Activated B cell treated with CpG ODN at 0.5 μM for 24 hours (primary cell): ENCODE measurements at regions of chr1 and their contacts with region 1.

Region 1: DNA sequence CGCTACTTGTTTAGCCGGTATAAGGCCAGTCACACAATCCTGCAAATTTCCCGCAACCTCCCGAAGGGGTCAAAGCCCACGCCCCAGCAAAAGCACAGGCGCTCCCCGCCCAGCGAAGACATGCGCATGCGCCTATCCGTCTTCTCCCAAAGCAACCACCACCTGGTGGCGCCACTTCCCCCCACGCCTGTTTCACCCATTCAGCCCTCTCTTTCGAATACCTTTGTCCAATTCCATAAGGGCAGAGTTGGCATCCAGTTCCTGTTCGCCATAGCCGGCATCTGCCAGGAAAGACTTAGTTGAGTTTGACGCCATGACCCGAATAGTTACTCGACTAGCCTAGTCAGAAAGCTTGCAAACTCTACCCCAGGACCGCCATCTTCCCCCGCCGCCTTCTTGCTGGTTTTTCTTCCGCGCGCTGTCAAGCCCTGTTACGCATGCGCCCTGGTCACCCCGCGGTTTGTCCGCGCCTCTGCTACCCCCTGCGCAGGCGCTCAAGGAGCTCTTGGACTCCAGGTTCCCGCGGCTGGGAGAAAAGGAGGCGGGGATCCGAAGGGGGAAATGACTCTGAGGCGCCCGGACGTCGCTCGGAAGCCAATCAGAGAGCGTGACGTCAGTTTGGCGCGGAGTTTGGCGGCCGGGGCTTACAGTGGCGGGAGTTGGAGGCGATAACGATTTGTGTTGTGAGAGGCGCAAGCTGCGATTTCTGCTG is at the starts of genes DTL and INTS7:
- DNase-seq: peak; percentile 93
- ATAC-seq: peak; percentile 86
- H3K4me3 Mint-ChIP-seq: peak within 1 kb of the TSS; percentile 99
- H3K27ac Mint-ChIP-seq: peak within 1 kb of the TSS; percentile 99
- H3K4me1 Mint-ChIP-seq: peaks cover 58% of the 10 kb centered on the region
- H3K27me3 Mint-ChIP-seq: no peaks in the 10 kb centered on the region
- CTCF ChIP-seq: peak; percentile 38
- total RNA-seq, gene DTL: 4.2 and 5.0 TPM in 2 replicates
- total RNA-seq, gene INTS7: 19.1 and 19.9 TPM in 2 replicates

Region 2: DNA sequence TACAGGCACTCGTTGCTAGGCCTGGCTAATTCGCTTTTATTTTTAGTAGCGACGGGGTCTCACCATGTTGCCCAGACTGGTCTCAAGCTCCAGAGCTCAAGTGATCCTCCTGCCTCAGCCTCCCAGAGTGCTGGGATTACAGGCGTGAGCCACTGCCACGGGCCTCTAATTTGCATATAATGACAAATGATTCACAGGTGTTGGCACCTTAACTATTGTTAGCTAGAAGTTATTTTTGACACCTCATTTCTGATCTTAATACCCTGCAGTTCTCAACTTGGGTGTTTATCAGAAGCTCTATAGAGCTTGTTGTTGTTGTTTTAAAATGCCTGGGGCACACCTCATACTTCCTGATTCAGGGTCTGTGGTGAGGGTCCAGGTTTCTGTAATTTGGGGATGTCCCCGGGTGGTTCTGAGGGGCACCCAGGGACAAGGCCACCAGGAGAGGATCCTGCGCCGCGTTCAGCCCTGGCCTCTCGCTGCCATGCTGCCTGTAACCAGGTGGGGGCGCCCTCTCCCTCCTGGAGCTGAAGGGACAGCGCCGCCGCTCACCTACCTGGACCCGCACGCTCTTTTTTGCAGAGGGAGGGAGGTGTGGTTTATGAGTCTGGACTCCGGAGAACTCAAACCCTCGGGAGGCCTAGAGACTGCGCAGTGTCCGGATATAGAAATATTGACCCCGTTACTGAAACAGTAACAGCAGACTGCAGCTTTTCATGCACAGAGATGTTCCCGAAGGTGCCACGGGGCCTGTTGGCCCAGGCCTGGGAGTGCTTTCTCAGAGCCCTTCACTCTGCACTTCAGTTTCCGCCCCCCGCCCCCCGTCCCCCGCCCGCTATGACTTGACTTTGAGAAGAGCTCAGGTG is 336.9 kb before region 1 on chr1:
- CTCF ChIA-PET with region 1: interaction called, 3 read pairs
- POLR2A ChIA-PET with region 1: interaction called, 7 read pairs
- intact Hi-C with region 1: loop called (anchors 1 kb)
- DNase-seq: peak; percentile 59
- ATAC-seq: peak; percentile 40
- H3K4me3 Mint-ChIP-seq: peak overlapping the region; percentile 68
- H3K27ac Mint-ChIP-seq: no peak overlapping the region
- H3K4me1 Mint-ChIP-seq: peaks cover 57% of the 10 kb centered on the region
- H3K27me3 Mint-ChIP-seq: peaks cover 3% of the 10 kb centered on the region
- CTCF ChIP-seq: peak; percentile 22

Region 3: GRCh38 chr1:211781260-211781659 is 254.0 kb before region 1 on chr1:
- CTCF ChIA-PET with region 1: no interaction called
- POLR2A ChIA-PET with region 1: no interaction called
- intact Hi-C with region 1: no loop called
- DNase-seq: no peak
- ATAC-seq: no peak
- H3K4me3 Mint-ChIP-seq: no peak overlapping the region
- H3K27ac Mint-ChIP-seq: no peak overlapping the region
- H3K4me1 Mint-ChIP-seq: peaks cover 2% of the 10 kb centered on the region
- H3K27me3 Mint-ChIP-seq: no peaks in the 10 kb centered on the region
- CTCF ChIP-seq: no peak

Region 4: GRCh38 chr1:212070720-212071302 is 35.5 kb after region 1 on chr1:
- CTCF ChIA-PET with region 1: interaction called, 12 read pairs
- POLR2A ChIA-PET with region 1: no interaction called
- intact Hi-C with region 1: no loop called
- DNase-seq: no peak
- ATAC-seq: peak; percentile 47
- H3K4me3 Mint-ChIP-seq: no peak overlapping the region
- H3K27ac Mint-ChIP-seq: no peak overlapping the region
- H3K4me1 Mint-ChIP-seq: no peaks in the 10 kb centered on the region
- H3K27me3 Mint-ChIP-seq: no peaks in the 10 kb centered on the region
- CTCF ChIP-seq: no peak

Region 5: DNA sequence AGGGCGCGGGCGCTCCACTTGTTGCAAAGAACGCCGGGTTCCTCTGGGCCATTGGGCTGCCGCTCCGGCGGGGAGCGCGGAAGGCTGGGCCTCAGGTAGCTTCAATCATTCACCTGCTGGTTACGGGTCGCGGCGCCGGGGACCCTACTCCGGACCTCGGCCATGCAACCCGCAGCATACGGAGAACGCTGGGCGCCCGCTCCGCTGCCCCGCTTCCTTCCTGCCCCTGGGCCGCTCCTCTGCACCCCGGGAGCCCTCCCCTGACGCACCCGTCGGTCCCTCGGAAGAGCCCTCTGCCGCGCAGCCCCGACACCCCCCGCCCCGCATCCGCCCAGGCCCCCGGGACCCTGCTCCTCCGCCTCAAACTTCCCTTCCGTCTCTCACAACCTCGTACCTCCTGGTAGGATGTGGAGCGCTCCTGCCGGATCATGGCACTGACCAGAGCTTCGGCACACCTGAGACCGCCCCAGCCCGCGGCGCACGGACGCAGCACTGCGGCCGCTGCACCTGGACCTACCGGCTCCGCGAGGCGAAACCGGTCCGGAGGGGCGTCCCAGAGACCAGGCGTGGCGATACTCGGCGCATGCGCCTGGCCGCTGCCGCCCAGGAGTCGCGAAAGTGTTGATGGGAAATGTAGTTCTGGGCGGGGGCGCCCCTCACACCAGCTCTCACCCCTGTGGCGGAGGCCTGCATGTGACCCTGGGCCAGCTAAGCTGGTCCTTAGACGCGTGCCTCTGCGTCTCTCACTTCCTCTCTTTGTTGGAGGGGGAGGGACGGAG is 379.2 kb after region 1 on chr1 and contains the start of gene PACC1:
- CTCF ChIA-PET with region 1: interaction called, 3 read pairs
- POLR2A ChIA-PET with region 1: no interaction called
- intact Hi-C with region 1: loop called (anchors 1 kb)
- DNase-seq: peak; percentile 93
- ATAC-seq: peak; percentile 98
- H3K4me3 Mint-ChIP-seq: peak within 1 kb of the TSS; percentile 100
- H3K27ac Mint-ChIP-seq: peak within 1 kb of the TSS; percentile 96
- H3K4me1 Mint-ChIP-seq: peaks cover 43% of the 10 kb centered on the region
- H3K27me3 Mint-ChIP-seq: no peaks in the 10 kb centered on the region
- CTCF ChIP-seq: no peak
- total RNA-seq, gene PACC1: 15.2 and 20.0 TPM in 2 replicates

Region 6: DNA sequence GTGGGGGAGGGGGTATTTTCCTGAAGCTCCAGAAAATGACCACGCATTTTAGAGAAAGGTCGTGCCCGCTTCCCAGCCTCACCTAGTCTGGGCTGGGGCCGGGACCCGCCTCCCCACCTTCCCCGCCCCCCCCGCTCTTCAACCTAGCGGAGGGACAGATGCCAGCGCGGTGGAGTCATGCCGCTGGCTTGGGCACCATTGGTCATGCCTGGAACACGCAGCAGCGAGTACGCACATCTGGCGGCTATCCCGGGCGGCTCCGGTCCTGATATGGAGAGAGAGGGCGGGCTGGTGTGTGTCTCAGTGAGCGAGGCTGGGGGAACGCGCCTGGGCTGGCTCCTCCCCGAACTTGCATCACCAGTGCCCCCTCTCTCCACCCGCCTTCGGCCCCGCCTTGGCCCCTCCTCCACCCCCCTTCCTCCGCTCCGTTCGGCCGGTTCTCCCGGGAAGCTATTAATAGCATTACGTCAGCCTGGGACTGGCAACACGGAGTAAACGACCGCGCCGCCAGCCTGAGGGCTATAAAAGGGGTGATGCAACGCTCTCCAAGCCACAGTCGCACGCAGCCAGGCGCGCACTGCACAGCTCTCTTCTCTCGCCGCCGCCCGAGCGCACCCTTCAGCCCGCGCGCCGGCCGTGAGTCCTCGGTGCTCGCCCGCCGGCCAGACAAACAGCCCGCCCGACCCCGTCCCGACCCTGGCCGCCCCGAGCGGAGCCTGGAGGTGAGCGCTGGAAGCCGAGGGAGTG is 573.1 kb after region 1 on chr1 and contains the start of gene ATF3:
- CTCF ChIA-PET with region 1: no interaction called
- POLR2A ChIA-PET with region 1: interaction called, 3 read pairs
- intact Hi-C with region 1: loop called (anchors 1 kb)
- DNase-seq: peak; percentile 76
- ATAC-seq: peak; percentile 84
- H3K4me3 Mint-ChIP-seq: peak within 1 kb of the TSS; percentile 95
- H3K27ac Mint-ChIP-seq: peak within 1 kb of the TSS; percentile 90
- H3K4me1 Mint-ChIP-seq: peaks cover 29% of the 10 kb centered on the region
- H3K27me3 Mint-ChIP-seq: peaks cover 32% of the 10 kb centered on the region
- CTCF ChIP-seq: no peak
- total RNA-seq, gene ATF3: 13.1 and 16.8 TPM in 2 replicates